Naive thymus-derived CD4-positive, alpha-beta T cell (primary cell): ENCODE measurements at regions of chr11 and their contacts with region 1.

Region 1: DNA sequence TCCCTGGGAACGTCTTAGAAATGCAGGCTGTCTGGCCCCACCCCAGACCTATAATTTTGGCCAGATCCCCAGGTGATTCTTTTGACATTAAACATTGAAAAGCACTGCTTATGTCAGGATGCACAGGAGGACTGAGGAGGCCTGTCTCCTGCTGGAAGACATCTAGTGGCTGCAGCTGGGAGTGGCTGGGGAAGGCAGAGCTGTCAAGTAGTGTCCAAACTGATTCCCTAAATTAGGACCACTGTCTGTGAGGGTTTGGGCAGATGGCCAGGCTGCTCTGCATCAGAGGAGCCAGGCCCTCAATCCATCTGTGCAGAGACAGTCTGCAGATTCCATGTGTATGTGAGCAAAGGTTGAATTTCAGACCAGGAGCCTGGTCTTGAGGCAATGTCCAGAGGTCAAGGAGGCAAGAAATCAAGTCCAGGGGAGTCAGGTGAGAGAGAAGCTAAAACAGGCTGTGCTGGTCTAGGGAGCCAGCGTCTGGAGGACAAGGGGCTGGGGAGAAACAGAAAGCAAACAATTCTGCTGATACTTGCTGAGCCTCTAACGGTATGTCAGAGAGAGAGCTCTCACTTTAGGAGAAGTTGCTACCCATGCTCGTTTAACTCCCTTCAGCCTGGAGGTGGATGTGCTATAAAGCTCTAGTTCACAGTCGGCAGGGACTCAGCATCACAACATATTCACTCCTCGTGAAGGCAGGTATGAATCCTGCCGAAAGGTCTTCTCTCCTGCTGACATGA is 15.3 kb upstream of the SYTL2 start:
- DNase-seq: peak in 3 of 9 donors; percentile 24 to 39 (median 28)
- ATAC-seq: no peak
- H3K4me3 ChIP-seq: no peak overlapping the region
- H3K4me3 Mint-ChIP-seq: peak overlapping the region in 9 of 10 donors; percentile 11 to 65 (median 40)
- H3K27ac ChIP-seq: no peak overlapping the region
- H3K27ac Mint-ChIP-seq: peak overlapping the region; percentile 59 to 100 (median 93)
- H3K4me1 ChIP-seq: peaks cover 55 to 57% of the 10 kb centered on the region in 2 donors
- H3K4me1 Mint-ChIP-seq: peaks cover 28 to 72% (median 64%) of the 10 kb centered on the region in 7 donors
- H3K27me3 ChIP-seq: no peaks in the 10 kb centered on the region
- H3K27me3 Mint-ChIP-seq: no peaks in the 10 kb centered on the region

Region 2: DNA sequence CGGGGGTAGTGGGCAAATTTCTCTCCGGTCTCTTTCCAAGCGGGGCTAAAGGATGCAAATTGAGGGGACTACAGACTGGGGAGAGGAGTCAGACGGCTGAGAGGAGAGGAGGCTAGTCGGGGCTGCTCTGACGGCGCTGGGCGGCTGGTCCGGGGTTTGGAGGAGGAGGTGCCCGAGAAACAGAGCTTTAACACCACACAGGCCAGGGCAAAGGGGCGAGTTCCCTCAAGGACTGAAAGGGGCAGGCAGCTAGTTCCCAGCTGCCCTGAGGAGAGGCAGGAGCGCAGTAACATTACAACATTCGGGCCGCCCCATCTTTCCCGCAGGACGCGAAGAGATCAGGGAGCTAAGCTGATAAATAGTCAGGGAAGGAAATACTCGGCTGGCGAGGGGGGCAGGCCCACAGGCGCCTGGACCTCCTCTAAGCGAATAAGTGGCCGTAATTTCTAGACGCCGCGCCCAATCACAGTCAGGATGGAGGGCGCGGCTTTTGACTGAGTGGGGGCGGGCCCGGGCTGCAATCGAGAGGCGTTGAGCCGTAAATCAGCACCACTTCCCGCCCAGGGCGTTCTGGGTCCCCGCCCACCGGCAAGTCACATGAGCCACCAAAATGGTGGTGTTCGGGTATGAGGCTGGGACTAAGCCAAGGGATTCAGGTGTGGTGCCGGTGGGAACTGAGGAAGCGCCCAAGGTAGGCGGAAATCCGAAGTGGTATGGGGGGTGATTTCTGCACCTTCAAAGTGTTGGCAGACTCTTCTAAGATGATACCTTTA is 198.1 kb before region 1 on chr11 and contains the start of gene TMEM126B:
- CTCF ChIA-PET with region 1: no interaction called
- POLR2A ChIA-PET with region 1: no interaction called
- intact Hi-C with region 1: loop called in 1 of 2 experiments (anchors 2 kb)
- DNase-seq: peak; percentile 85 to 95 (median 94)
- ATAC-seq: peak; percentile 99
- H3K4me3 ChIP-seq: peak within 1 kb of the TSS; percentile 98
- H3K4me3 Mint-ChIP-seq: peak within 1 kb of the TSS; percentile 84 to 98 (median 94)
- H3K27ac ChIP-seq: peak within 1 kb of the TSS; percentile 85
- H3K27ac Mint-ChIP-seq: peak within 1 kb of the TSS; percentile 89 to 97 (median 94)
- H3K4me1 ChIP-seq: peaks cover 13 to 22% of the 10 kb centered on the region in 2 donors
- H3K4me1 Mint-ChIP-seq: peaks cover 17 to 67% (median 48%) of the 10 kb centered on the region in 7 donors
- H3K27me3 ChIP-seq: no peaks in the 10 kb centered on the region
- H3K27me3 Mint-ChIP-seq: peaks cover 0 to 9% (median 0%) of the 10 kb centered on the region in 5 donors
- total RNA-seq, gene TMEM126B: 22.1 to 50.4 (median 36.4) TPM

Region 3: GRCh38 chr11:85682330-85683305 is 143.7 kb before region 1 on chr11:
- CTCF ChIA-PET with region 1: interaction called, 3 read pairs
- POLR2A ChIA-PET with region 1: no interaction called
- intact Hi-C with region 1: loop called in 1 of 2 experiments (anchors 1 kb)
- DNase-seq: peak; percentile 27 to 66 (median 43)
- ATAC-seq: peak; percentile 78
- H3K4me3 ChIP-seq: peak overlapping the region; percentile 82
- H3K4me3 Mint-ChIP-seq: peak overlapping the region; percentile 78 to 92 (median 88)
- H3K27ac ChIP-seq: peak overlapping the region; percentile 75
- H3K27ac Mint-ChIP-seq: peak overlapping the region; percentile 60 to 93 (median 81)
- H3K4me1 ChIP-seq: no peaks in the 10 kb centered on the region
- H3K4me1 Mint-ChIP-seq: peaks cover 10 to 28% (median 14%) of the 10 kb centered on the region in 7 donors
- H3K27me3 ChIP-seq: no peaks in the 10 kb centered on the region
- H3K27me3 Mint-ChIP-seq: peaks cover 0 to 24% (median 4%) of the 10 kb centered on the region in 5 donors

Region 4: DNA sequence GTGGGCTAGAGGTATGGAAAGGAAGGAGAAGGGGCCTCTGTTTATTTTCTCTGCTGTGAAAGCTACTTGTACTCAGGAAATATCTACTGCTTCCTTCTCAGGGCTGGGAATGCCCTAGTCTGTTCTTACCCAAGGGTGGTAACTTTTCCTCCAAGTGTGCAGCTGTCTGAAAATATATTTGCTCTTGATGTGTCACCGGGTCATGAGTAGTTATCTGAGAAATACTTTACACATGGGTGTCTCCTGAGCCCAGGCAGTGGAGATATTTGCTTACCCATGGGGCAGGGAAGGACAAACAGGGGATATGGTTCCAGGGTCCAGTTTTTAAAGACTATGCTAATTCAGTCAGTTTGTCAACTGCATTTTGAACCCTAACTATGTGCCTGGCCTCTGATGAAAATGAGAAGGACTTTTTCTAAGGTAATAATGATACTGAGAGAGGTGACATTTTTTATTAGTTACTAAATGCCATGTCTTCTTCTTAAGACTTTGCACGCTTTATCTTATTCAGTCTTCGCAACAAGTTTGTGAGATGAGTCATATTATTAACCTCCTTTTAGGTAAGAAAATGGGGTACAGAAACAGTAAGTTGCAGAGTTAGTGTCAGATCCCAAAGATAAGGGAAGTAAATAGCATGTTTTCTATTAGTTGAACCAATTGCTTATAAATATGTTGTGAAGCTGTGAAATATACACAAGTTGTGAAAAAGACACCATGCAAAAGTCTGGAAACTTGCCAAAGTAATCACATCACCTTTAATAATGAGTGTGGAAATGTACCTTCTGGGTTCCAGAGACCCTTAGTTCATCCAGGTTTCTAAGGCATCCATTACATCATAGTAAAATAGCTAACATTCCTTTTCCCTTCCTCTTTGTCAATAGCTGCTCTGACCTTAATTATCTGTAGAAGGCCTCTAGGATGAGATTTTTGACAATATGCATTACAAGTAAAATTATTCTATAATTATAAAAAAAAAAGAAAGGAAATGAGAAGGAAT is 38.2 kb before region 1 on chr11:
- CTCF ChIA-PET with region 1: interaction called, 3 read pairs
- POLR2A ChIA-PET with region 1: interaction called, 3 read pairs
- intact Hi-C with region 1: loop called in 1 of 2 experiments (anchors 1 kb)
- DNase-seq: no peak
- ATAC-seq: no peak
- H3K4me3 ChIP-seq: no peak overlapping the region
- H3K4me3 Mint-ChIP-seq: peak overlapping the region in 1 of 10 donors; percentile 29
- H3K27ac ChIP-seq: no peak overlapping the region
- H3K27ac Mint-ChIP-seq: peak overlapping the region in 4 of 9 donors; percentile 37 to 72 (median 54)
- H3K4me1 ChIP-seq: peaks cover 0 to 5% of the 10 kb centered on the region in 2 donors
- H3K4me1 Mint-ChIP-seq: peaks cover 2 to 59% (median 35%) of the 10 kb centered on the region in 7 donors
- H3K27me3 ChIP-seq: no peaks in the 10 kb centered on the region
- H3K27me3 Mint-ChIP-seq: no peaks in the 10 kb centered on the region

Region 5: GRCh38 chr11:85810871-85811611 is 15.2 kb before region 1 on chr11 and contains the start of gene SYTL2:
- CTCF ChIA-PET with region 1: interaction called, 4 read pairs
- POLR2A ChIA-PET with region 1: interaction called, 19 read pairs
- intact Hi-C with region 1: loop called (anchors 1 kb)
- DNase-seq: peak; percentile 69 to 87 (median 75)
- ATAC-seq: peak; percentile 95
- H3K4me3 ChIP-seq: peak within 1 kb of the TSS; percentile 86
- H3K4me3 Mint-ChIP-seq: peak within 1 kb of the TSS; percentile 87 to 97 (median 95)
- H3K27ac ChIP-seq: peak within 1 kb of the TSS; percentile 64
- H3K27ac Mint-ChIP-seq: peak within 1 kb of the TSS; percentile 79 to 98 (median 93)
- H3K4me1 ChIP-seq: peaks cover 14 to 32% of the 10 kb centered on the region in 2 donors
- H3K4me1 Mint-ChIP-seq: peaks cover 32 to 61% (median 52%) of the 10 kb centered on the region in 7 donors
- H3K27me3 ChIP-seq: no peaks in the 10 kb centered on the region
- H3K27me3 Mint-ChIP-seq: peaks cover 0 to 10% (median 0%) of the 10 kb centered on the region in 5 donors
- total RNA-seq, gene SYTL2: 24.8 to 62.9 (median 27.5) TPM

Region 6: DNA sequence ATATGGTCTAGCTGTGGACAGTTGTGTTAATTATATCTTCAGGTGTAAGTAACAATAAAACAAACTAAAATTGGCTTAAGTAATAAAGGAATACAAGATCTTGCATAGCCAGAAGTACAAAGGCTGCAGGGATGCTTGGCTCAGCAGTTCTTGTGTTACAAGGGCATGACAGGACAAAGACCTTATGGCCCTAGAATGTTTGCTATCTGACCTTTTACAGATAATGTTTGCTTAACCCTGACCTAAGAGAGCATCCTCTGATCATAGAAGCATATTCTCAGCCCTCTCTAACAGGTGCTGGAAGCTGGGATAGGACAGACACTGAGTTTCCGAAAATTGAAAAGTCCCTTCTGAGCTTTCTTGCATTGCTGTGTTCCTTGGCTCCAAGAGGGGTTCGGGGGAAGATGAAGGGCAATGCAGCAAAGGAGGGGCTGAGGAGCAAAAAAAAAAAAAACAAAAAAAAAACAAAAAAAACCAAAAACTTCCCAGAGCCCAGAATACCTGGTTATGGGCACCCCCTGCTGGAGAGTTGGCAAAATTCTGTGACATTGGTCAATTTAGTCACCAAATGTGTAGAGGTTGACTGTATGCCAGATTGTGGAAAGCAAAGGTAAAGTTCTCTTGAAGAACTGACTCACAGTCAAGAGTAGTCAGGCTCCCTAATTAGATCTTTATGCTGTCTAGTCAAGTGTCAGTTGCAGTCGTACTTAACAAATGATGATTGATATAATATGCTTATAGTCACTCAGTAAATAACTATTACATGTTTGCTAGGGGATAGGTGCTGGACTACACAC is 465.4 kb after region 1 on chr11:
- CTCF ChIA-PET with region 1: no interaction called
- POLR2A ChIA-PET with region 1: no interaction called
- intact Hi-C with region 1: loop called in 1 of 2 experiments (anchors 1 kb)
- DNase-seq: peak; percentile 11 to 63 (median 49)
- ATAC-seq: peak; percentile 76
- H3K4me3 ChIP-seq: no peak overlapping the region
- H3K4me3 Mint-ChIP-seq: peak overlapping the region in 1 of 10 donors; percentile 23
- H3K27ac ChIP-seq: no peak overlapping the region
- H3K27ac Mint-ChIP-seq: peak overlapping the region in 1 of 9 donors; percentile 35
- H3K4me1 ChIP-seq: peaks cover 0 to 27% of the 10 kb centered on the region in 2 donors
- H3K4me1 Mint-ChIP-seq: peaks cover 5 to 47% (median 9%) of the 10 kb centered on the region in 7 donors
- H3K27me3 ChIP-seq: no peaks in the 10 kb centered on the region
- H3K27me3 Mint-ChIP-seq: no peaks in the 10 kb centered on the region

Region 7: DNA sequence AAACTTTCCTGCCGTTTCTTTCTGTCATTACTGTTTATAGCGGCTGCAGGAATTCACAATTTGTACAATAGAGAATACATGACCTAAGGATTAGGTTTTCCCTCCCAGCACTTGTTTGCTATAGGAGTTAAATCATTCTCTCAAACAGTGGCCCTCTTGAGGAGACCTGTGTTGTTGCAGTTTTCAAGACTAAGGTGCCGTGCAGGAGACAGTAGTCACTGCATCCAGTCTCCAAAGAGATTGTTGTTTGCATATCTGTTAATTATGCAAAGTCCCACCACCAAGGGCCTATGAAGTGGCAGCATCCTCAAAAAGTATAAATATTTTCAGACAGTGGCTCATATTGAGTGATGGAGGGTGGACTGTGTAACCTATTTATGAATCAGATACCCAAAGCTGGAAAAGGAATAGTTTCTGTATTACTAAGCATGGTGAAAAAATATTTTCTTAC is 976.3 kb after region 1 on chr11:
- CTCF ChIA-PET with region 1: no interaction called
- POLR2A ChIA-PET with region 1: no interaction called
- intact Hi-C with region 1: loop called in 1 of 2 experiments (anchors 10 kb)
- DNase-seq: no peak
- ATAC-seq: peak; percentile 41
- H3K4me3 ChIP-seq: no peak overlapping the region
- H3K4me3 Mint-ChIP-seq: peak overlapping the region in 1 of 10 donors; percentile 40
- H3K27ac ChIP-seq: no peak overlapping the region
- H3K27ac Mint-ChIP-seq: no peak overlapping the region
- H3K4me1 ChIP-seq: peaks cover 0 to 25% of the 10 kb centered on the region in 2 donors
- H3K4me1 Mint-ChIP-seq: peaks cover 0 to 59% (median 9%) of the 10 kb centered on the region in 7 donors
- H3K27me3 ChIP-seq: peaks cover 0 to 4% of the 10 kb centered on the region in 2 donors
- H3K27me3 Mint-ChIP-seq: peaks cover 28 to 56% (median 53%) of the 10 kb centered on the region in 5 donors